CD8-positive, alpha-beta memory T cell (primary cell): ENCODE measurements at regions of chr16 and their contacts with region 1.

Region 1: DNA sequence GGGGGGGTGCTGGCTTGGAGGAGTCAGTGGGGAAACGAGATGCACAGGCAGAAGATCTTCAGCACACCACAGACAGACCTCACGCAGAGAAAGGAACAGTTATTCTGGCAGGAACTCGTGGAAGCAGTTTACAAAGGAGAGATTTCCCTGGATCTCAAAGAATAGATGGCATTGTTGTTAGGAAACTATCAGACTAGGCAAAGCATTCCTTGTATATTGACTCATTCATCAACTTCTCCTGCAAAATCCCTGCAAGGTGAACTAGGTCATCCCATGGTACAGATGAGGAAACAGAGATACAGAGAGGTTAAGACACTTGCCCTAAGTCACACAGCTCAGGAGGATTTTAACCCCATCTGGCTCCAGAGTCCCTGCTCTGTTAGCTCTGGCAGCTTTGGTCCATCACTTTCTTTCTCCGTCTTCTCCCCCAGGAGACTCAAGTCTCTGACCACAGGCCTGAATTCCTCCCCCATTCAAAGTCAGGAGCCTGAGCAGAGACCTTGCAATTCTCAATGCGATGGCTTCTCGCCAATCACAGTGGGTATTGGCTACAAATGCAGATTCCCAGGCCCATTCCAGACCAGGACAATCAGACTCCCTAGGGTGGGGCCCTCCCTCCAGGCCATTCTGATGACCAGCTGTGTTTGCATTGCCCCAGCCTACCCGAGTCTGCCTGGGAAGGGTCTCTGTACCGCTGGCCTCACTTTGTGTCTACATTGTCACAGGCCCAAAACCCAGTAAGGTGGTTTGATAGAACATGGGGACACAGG is 56.4 kb downstream of the LITAF start:
- DNase-seq: no peak
- H3K4me3 ChIP-seq: no peak overlapping the region
- H3K4me3 Mint-ChIP-seq: no peak overlapping the region
- H3K27ac ChIP-seq: no peak overlapping the region
- H3K27ac Mint-ChIP-seq: no peak overlapping the region
- H3K4me1 ChIP-seq: no peaks in the 10 kb centered on the region
- H3K4me1 Mint-ChIP-seq: peaks cover 6 to 20% (median 13%) of the 10 kb centered on the region in 3 donors
- H3K27me3 ChIP-seq: no peaks in the 10 kb centered on the region
- H3K27me3 Mint-ChIP-seq: no peaks in the 10 kb centered on the region

Region 2: DNA sequence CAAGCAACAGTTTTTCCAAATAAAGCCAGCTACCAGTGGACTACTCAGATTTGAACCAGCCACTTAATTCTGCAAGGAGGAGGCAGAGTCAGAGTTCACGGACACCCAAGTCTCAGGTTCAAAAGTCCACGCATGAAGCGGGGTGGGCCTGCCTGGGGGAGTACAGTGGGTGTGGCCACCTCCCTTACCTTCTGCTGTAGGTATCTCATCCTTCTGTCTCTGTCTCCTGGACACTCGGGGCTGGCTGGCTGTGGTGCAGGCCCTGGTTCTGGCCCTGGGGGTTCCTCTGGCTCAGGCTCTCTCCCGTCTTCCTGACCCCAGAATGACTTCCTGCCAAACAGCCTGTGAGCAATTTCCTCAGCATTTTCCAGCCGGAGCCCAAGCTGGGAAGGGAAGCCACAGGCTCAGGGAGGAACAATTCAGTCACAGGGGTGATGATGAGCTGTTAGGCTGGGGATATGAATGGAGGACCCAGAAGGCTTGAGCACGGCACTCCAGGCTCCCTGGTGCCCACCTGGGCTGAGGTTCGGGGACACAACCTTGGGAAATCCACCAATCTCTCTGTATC is 45.6 kb before region 1 on chr16:
- CTCF ChIA-PET with region 1: no interaction called
- POLR2A ChIA-PET with region 1: no interaction called
- DNase-seq: no peak
- H3K4me3 ChIP-seq: no peak overlapping the region
- H3K4me3 Mint-ChIP-seq: no peak overlapping the region
- H3K27ac ChIP-seq: no peak overlapping the region
- H3K27ac Mint-ChIP-seq: peak overlapping the region in 1 of 8 donors; percentile 4
- H3K4me1 ChIP-seq: no peaks in the 10 kb centered on the region
- H3K4me1 Mint-ChIP-seq: no peaks in the 10 kb centered on the region
- H3K27me3 ChIP-seq: no peaks in the 10 kb centered on the region
- H3K27me3 Mint-ChIP-seq: peaks cover 0 to 4% of the 10 kb centered on the region in 2 donors

Region 3: GRCh38 chr16:11619327-11619851 is 89.0 kb after region 1 on chr16:
- CTCF ChIA-PET with region 1: interaction called, 14 read pairs
- POLR2A ChIA-PET with region 1: no interaction called
- DNase-seq: peak in 4 of 5 donors; percentile 13 to 68 (median 58)
- H3K4me3 ChIP-seq: peak overlapping the region; percentile 5
- H3K4me3 Mint-ChIP-seq: peak overlapping the region; percentile 1 to 79 (median 74)
- H3K27ac ChIP-seq: peak overlapping the region; percentile 6
- H3K27ac Mint-ChIP-seq: peak overlapping the region; percentile 91 to 98 (median 96)
- H3K4me1 ChIP-seq: peaks cover 80% of the 10 kb centered on the region
- H3K4me1 Mint-ChIP-seq: peaks cover 52 to 75% (median 58%) of the 10 kb centered on the region in 3 donors
- H3K27me3 ChIP-seq: no peaks in the 10 kb centered on the region
- H3K27me3 Mint-ChIP-seq: no peaks in the 10 kb centered on the region

Region 4: DNA sequence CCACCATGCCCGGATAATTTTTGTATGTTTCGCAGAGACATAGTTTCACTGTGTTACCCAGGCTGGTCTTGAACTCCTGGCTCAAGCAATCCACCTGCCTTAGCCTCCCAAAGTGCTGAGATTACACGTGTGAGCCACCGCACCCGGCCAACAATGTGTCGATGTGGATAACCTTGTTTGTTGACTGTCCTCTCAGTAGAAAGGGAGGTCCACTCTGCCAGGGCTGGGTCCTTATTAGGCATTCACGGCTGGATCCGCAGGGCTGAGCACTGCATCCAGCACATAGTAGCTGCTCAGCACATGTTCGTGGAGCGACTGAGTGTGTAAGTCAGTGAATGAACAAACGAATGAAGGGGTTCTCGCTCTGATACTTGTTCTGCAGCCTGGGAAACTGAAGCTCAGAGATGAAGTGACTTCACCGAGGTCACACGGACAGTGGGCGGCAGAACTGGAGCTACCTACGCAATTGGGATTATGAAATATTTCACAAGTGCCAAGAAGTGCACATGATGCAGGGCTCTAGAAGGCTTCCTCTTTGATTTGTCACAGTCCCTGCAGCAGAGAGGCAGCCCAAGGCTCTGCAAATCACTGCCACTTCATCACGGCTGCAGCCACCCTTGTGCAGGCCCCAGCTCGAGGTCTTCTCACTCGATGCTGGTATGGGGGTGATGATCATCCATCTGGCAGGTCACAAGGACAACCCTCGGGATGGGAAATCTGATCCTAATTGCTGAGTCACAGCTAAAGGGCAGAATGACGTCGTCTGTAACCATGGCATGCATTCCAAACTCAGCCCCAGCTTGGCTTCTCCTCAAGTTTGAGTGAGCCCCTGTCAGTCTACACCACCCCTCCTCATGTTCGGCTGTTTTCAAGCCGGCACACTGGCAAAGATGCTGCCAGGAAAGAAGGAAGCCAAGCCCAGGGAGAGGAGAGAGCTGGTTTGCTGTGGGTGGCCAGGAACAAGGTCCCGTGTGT is 109.9 kb after region 1 on chr16:
- CTCF ChIA-PET with region 1: interaction called, 70 read pairs
- POLR2A ChIA-PET with region 1: no interaction called
- DNase-seq: no peak
- H3K4me3 ChIP-seq: no peak overlapping the region
- H3K4me3 Mint-ChIP-seq: peak overlapping the region in 1 of 7 donors; percentile 26
- H3K27ac ChIP-seq: no peak overlapping the region
- H3K27ac Mint-ChIP-seq: peak overlapping the region in 5 of 8 donors; percentile 23 to 80 (median 43)
- H3K4me1 ChIP-seq: peaks cover 16% of the 10 kb centered on the region
- H3K4me1 Mint-ChIP-seq: peaks cover 17 to 21% (median 20%) of the 10 kb centered on the region in 3 donors
- H3K27me3 ChIP-seq: no peaks in the 10 kb centered on the region
- H3K27me3 Mint-ChIP-seq: peaks cover 0 to 5% of the 10 kb centered on the region in 2 donors

Region 5: DNA sequence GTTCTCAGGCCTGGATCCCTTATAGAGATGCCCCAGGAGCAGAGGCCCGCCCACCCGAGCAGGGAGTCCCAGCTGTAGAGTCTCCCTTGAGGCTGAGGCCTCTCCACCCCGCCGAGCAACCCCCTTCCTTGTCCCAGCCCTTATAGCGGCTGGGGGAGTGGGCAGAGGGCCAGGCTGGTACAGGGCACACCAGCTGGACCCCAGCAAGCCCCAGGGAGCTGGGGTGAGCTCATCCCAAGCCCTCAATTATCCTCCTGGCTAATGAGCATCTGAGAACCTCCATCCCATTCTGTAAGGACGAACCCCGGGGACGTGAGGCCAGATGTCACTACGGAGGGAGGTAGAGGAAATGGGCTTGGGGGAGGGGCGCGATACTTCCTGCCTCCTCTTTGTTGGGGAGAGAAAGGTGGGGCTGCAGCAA is 134.7 kb after region 1 on chr16:
- CTCF ChIA-PET with region 1: interaction called, 15 read pairs
- POLR2A ChIA-PET with region 1: interaction called, 3 read pairs
- DNase-seq: peak in 2 of 5 donors; percentile 60 to 66
- H3K4me3 ChIP-seq: peak overlapping the region; percentile 11
- H3K4me3 Mint-ChIP-seq: peak overlapping the region; percentile 51 to 80 (median 62)
- H3K27ac ChIP-seq: no peak overlapping the region
- H3K27ac Mint-ChIP-seq: peak overlapping the region in 7 of 8 donors; percentile 25 to 85 (median 79)
- H3K4me1 ChIP-seq: peaks cover 49% of the 10 kb centered on the region
- H3K4me1 Mint-ChIP-seq: peaks cover 29 to 45% (median 42%) of the 10 kb centered on the region in 3 donors
- H3K27me3 ChIP-seq: no peaks in the 10 kb centered on the region
- H3K27me3 Mint-ChIP-seq: no peaks in the 10 kb centered on the region